Activated naive CD4-positive, alpha-beta T cell treated with anti-CD3 and anti-CD28 coated beads for 36 hours (primary cell): ENCODE measurements at regions of chr10 and their contacts with region 1.

Region 1: GRCh38 chr10:77756319-77757232 is 119.0 kb upstream of the KCNMA1 start:
- DNase-seq: peak; percentile 44
- H3K4me3 Mint-ChIP-seq: no peak overlapping the region
- H3K27ac Mint-ChIP-seq: no peak overlapping the region
- H3K4me1 Mint-ChIP-seq: no peaks in the 10 kb centered on the region
- H3K27me3 Mint-ChIP-seq: peaks cover 15% of the 10 kb centered on the region

Region 2: DNA sequence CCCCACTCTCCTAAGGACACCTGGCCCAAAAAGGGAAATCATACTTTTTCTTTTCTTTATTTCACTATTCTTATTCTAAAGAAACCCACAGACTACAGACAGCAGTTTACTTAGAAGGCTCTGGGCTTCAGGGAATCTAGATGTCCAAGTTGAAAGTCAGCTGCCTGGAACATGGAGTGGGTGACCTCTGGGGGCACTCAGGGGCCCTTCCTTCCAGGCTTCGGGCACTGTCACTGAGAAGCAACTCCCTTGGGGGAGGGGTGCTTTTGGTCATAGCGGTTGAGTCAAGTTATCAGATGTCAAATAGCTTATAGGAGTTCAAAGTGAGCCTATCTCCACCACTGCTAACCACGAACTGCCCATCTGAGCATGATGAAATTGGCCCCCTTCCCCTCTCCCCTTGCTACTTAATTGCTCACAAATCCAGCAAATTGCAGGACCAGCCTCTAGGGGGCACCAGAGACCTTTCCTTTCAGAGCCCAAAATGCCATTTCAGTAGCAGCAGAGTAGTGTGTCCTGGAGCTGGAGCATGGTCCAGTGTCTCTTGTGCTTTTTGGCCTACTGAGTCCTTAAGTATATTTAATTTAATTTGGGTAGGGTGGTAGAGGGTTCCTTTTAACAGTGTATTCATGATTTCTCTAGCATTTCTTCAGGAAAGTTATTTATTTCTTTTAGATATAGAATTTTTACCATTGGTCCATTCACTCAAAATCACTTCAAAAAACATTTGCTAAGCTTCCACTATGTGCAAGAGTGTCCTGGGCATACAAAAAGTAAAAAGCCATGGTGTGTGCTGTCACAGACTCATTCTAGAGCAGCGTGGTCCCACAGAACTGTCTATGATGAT is 582.7 kb before region 1 on chr10:
- CTCF ChIA-PET with region 1: no interaction called
- intact Hi-C with region 1: loop called (anchors 1 kb)
- DNase-seq: peak; percentile 82
- H3K4me3 Mint-ChIP-seq: no peak overlapping the region
- H3K27ac Mint-ChIP-seq: no peak overlapping the region
- H3K4me1 Mint-ChIP-seq: no peaks in the 10 kb centered on the region
- H3K27me3 Mint-ChIP-seq: peaks cover 16% of the 10 kb centered on the region

Region 3: DNA sequence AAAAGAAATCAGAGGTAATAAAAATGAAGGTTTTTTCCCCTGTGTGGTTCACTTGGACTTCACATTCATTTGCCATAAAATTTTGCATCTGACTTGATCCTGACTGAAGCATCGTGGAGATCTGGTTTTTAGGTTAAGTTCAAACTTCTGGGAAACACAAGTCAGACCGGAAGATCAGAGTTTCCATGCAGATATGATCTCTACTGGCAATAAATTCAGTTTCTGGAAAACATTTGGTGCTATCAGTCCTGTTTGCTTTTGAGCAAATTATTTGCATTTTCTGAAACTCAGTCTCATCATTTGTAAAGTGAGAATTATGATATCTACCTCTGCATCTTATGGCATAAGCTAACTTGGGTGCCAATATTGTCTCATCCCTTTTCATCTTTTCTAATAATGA is 37.6 kb before region 1 on chr10:
- CTCF ChIA-PET with region 1: interaction called, 5 read pairs
- intact Hi-C with region 1: loop called (anchors 1 kb)
- DNase-seq: no peak
- H3K4me3 Mint-ChIP-seq: no peak overlapping the region
- H3K27ac Mint-ChIP-seq: no peak overlapping the region
- H3K4me1 Mint-ChIP-seq: no peaks in the 10 kb centered on the region
- H3K27me3 Mint-ChIP-seq: peaks cover 8% of the 10 kb centered on the region

Region 4: DNA sequence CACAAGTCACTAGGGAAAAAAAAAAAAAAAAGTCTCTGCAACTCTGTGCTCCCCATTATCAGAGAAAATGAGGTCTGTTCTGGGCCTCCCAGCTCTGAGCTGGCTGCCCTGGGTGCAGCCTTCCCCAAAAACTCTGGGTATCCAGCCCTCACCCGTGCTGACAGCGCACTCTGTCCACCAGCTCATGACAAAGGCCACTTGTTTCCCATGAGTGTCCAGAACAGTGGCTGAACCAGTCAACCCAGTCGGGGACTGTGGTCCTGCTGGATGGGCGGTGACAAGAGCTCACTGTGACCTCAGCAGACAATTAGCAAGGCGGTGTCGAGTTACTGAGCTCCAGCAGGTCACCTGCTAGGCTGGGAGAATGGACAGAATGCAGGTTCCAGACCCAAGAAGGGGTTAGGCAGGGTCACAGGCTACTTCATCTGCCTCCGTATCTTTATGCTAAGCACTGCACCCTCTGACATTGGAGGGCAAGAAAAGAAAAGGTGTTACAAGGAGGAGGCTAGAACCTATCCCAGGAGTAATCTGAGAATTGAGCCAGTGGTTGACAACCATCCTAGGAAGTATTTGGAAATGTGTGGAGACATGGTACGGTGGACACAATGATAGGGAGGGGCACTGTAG is 132.8 kb after region 1 on chr10:
- CTCF ChIA-PET with region 1: no interaction called
- intact Hi-C with region 1: no loop called
- DNase-seq: no peak
- H3K4me3 Mint-ChIP-seq: no peak overlapping the region
- H3K27ac Mint-ChIP-seq: no peak overlapping the region
- H3K4me1 Mint-ChIP-seq: no peaks in the 10 kb centered on the region
- H3K27me3 Mint-ChIP-seq: no peaks in the 10 kb centered on the region